ENCODE measurements at regions of chr16 and their contacts with region 1.

Region 1: DNA sequence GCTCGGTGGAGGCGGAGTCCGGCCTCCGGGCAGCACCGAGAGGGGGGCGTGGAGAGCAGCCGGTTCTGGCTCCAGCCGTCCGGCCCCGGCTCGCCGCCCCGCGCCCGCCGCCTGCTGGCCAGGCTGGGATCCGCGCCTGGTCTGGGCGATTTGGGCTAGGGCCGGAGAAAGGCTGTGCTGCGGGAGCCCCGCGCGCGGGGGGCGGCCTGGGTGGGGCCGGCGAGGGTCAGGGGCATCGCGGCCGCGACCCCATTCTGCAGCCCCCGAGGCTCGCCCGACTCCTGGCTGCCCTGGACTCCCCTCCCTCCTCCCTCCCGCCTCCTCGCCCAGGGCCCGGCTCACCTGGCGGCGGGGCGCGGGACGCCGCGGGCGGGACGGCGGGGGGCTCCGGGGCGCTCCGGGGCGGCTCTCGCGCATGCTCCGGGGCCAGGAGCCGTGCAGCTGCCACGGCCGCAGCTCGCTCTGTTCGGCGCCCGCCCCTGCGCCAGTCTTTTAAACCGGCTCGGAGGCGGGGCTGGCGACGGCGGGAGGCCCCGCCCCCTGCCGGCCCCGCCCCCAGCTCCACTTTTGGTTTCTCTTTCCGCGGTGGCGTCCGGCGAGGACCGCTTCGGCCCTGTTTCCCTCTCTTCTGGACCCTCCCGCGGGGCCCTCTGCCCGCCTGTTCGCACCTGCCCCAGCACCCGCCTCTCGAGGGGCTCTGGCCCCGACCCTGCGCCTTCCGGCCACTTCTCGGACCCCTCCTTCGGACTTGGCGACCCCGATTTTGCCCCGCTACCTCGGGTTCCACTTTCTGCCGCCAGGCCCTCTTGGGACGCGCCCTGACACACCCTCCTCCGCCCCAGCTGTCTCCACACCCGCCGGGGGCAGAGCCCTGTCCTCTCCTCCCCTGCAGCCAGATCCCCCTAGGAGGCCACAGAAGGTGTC is at the start of gene SOCS1:
- DNase-seq: peak; percentile 89 to 96
- H3K4me3 ChIP-seq: peak within 1 kb of the TSS; percentile 61 to 89 (median 75)
- H3K27ac ChIP-seq: peak within 1 kb of the TSS; percentile 92 to 99 (median 98)
- H3K4me1 ChIP-seq: peaks cover 31 to 57% (median 46%) of the 10 kb centered on the region in 4 donors
- H3K27me3 ChIP-seq: no peaks in the 10 kb centered on the region
- CTCF ChIP-seq: peak in 5 of 7 experiments; percentile 55 to 96 (median 93)
- EP300 ChIP-seq: no peak
- POLR2A ChIP-seq: no peak
- total RNA-seq, gene SOCS1: 4.2 to 45.5 (median 12.1) TPM

Region 2: DNA sequence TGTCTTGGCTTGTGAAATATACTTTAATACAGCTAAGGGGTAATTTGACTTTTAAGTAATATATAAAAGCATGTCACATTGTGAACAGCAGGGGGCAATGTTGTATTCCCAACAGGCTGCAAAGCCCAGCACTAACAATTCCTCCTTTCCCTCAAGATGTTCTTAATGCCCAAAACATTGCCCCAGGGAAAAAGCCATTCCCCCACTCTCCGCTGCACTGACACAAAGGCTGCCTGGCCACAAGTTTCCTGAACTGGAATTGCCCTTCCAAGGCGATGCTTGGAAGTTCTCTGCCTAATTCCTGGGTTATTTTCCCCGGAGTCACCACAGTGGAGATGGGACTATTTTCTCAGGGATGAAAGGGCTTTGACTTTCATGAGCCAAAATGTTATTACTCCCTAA is 284.4 kb before region 1 on chr16:
- intact Hi-C with region 1: loop called (anchors 5 kb)
- DNase-seq: peak in 1 of 2 donors; percentile 91
- H3K4me3 ChIP-seq: no peak overlapping the region
- H3K27ac ChIP-seq: peak overlapping the region in 2 of 5 donors; percentile 15 to 35
- H3K4me1 ChIP-seq: peaks cover 8 to 22% (median 12%) of the 10 kb centered on the region in 4 donors
- H3K27me3 ChIP-seq: no peaks in the 10 kb centered on the region
- CTCF ChIP-seq: peak in 5 of 7 experiments; percentile 56 to 85 (median 76)
- EP300 ChIP-seq: no peak
- POLR2A ChIP-seq: no peak

Region 3: DNA sequence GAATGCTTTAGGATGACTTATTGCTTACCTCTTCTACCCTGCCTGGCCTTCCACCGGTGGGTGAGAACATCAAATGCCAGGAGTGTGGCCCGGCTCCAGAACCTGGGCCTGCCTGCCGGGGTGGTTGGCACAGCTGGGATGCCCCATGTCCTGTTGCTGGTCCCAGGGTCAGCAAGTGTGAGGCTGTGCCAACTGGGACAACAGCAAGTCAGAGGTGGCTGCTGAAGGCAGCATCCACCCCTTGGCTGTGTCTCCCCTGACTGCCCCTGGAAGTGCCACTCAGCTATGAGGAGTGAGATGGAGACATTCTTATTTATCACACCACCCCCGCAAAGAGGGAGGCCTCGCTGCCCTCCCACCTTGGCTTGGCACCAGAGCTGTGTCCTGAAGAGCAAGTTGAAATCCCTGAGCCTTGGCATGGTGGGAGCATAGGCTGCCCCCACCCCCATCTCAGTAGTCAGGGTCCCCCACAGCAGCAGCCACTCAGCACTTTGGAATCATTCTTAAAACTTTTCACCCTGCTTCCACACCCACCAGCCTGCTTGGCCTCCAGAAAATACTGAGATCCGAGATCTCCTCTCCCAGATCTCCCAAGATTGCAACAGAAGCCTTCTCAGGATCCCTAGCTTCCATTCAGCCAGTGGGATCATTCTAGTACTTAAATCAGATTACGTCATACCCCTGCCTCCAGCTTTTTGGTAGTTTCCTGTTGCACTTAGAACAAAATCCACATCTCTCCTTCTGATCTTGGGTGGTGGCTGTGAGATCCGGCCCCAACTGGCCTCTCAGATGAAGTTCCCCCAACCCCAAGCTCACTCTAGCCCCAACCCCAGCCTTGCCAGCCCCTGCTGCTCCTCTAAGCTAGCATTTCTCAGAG is 127.5 kb before region 1 on chr16:
- intact Hi-C with region 1: loop called (anchors 10 kb)
- DNase-seq: peak; percentile 70 to 79
- H3K4me3 ChIP-seq: no peak overlapping the region
- H3K27ac ChIP-seq: peak overlapping the region; percentile 23 to 86 (median 63)
- H3K4me1 ChIP-seq: peaks cover 17 to 60% (median 42%) of the 10 kb centered on the region in 4 donors
- H3K27me3 ChIP-seq: no peaks in the 10 kb centered on the region
- CTCF ChIP-seq: no peak
- EP300 ChIP-seq: no peak
- POLR2A ChIP-seq: no peak

Region 4: GRCh38 chr16:11297492-11298142 is 41.6 kb after region 1 on chr16:
- intact Hi-C with region 1: no loop called
- DNase-seq: peak; percentile 91 to 92
- H3K4me3 ChIP-seq: peak overlapping the region; percentile 12 to 27 (median 22)
- H3K27ac ChIP-seq: peak overlapping the region; percentile 25 to 73 (median 61)
- H3K4me1 ChIP-seq: peaks cover 16 to 28% (median 25%) of the 10 kb centered on the region in 4 donors
- H3K27me3 ChIP-seq: no peaks in the 10 kb centered on the region
- CTCF ChIP-seq: peak in 1 of 7 experiments; percentile 43
- EP300 ChIP-seq: no peak
- POLR2A ChIP-seq: no peak